A549 (cell line): ENCODE measurements at regions of chr12 and their contacts with region 1.

Region 1: DNA sequence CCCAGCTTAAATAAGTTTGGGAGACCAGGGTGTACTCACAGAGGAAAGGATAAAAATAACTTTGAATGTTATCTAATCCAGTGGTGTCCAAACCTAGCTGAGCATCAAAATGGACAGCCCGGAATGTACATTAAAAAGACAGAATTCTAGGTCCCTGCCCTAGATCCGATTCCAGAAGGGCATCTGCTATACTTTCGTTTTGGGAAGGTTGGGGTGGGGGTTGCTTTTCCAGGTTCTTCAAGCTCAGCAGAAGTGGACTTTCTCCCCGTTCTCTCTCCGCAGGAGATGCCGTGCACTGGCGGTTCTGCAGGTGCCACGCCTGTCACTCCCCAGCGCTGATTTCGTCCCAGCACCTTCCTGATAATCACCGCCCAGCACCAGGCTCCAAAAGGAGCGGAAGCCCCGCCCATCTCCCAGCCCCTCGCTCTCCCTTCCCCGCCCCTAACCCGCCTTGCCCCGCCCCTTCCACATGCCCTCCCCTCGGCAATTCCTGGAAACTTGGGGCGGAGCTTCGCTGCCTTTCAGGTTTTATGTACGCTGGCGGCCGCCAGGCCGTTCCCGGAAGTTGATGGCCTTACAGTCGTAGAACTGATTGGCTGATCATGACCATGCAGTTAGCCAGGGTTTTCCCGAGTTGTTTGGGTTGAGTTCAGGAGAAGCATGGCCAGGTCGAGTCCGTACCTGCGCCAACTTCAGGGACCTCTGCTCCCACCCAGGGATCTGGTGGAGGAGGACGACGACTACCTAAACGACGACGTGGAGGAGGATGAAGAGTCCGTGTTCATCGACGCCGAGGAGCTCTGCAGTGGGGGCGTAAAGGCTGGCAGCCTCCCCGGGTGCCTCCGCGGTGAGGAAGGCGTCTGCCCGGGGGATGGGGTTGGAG is at the start of gene HELB:
- DNase-seq: peak; percentile 90 to 98
- ATAC-seq: peak; percentile 98 to 99
- H3K4me3 ChIP-seq: peak within 1 kb of the TSS; percentile 63
- H3K27ac ChIP-seq: peak within 1 kb of the TSS; percentile 79 to 91
- H3K4me1 ChIP-seq: peaks cover 12% of the 10 kb centered on the region; the same call in 2 of the 3 replicates
- CTCF ChIP-seq: no peak
- EP300 ChIP-seq: no peak
- POLR2A ChIP-seq: peak; percentile 85
- RAD21 ChIP-seq: no peak
- polyA plus RNA-seq, gene HELB: 5.0 and 5.6 TPM in 2 replicates

Region 2: DNA sequence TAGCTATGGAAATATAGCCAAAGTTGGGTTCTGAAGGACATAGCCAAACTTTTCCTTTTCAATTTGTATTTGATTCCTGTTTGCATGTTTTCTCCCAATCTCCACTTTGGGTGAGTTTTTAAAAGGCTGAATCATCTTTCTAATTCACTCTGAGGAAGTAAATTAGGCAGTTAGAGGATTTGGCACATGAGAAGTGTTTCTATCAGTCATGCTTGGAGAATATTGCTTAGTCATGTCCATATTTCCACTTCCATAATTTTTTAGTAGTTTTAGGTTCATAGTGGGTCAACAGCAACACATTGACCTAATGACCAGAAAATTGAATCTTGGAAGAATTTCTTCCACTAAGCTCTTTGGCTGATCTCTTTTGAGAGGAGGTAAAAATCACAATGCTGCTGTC is 91.3 kb before region 1 on chr12:
- CTCF ChIA-PET with region 1: no interaction called
- POLR2A ChIA-PET with region 1: no interaction called
- DNase-seq: no peak
- ATAC-seq: no peak
- H3K4me3 ChIP-seq: no peak overlapping the region
- H3K27ac ChIP-seq: no peak overlapping the region
- H3K4me1 ChIP-seq: no peaks in the 10 kb centered on the region
- CTCF ChIP-seq: no peak
- EP300 ChIP-seq: no peak
- POLR2A ChIP-seq: no peak
- RAD21 ChIP-seq: no peak

Region 3: GRCh38 chr12:66312189-66312588 is 10.0 kb after region 1 on chr12:
- CTCF ChIA-PET with region 1: interaction called, 5 read pairs
- POLR2A ChIA-PET with region 1: interaction called, 10 read pairs
- DNase-seq: no peak
- ATAC-seq: no peak
- H3K4me3 ChIP-seq: no peak overlapping the region
- H3K27ac ChIP-seq: no peak overlapping the region
- H3K4me1 ChIP-seq: no peaks in the 10 kb centered on the region
- CTCF ChIP-seq: no peak
- EP300 ChIP-seq: no peak
- POLR2A ChIP-seq: no peak
- RAD21 ChIP-seq: no peak